AG04449 (cell line): ENCODE measurements at regions of chr1 and their contacts with region 1.

Region 1: GRCh38 chr1:203267347-203267846 is 37.9 kb upstream of the BTG2 start:
- DNase-seq: peak; percentile 29
- H3K4me3 ChIP-seq: peak overlapping the region; percentile 72
- CTCF ChIP-seq: peak; percentile 82

Region 2: DNA sequence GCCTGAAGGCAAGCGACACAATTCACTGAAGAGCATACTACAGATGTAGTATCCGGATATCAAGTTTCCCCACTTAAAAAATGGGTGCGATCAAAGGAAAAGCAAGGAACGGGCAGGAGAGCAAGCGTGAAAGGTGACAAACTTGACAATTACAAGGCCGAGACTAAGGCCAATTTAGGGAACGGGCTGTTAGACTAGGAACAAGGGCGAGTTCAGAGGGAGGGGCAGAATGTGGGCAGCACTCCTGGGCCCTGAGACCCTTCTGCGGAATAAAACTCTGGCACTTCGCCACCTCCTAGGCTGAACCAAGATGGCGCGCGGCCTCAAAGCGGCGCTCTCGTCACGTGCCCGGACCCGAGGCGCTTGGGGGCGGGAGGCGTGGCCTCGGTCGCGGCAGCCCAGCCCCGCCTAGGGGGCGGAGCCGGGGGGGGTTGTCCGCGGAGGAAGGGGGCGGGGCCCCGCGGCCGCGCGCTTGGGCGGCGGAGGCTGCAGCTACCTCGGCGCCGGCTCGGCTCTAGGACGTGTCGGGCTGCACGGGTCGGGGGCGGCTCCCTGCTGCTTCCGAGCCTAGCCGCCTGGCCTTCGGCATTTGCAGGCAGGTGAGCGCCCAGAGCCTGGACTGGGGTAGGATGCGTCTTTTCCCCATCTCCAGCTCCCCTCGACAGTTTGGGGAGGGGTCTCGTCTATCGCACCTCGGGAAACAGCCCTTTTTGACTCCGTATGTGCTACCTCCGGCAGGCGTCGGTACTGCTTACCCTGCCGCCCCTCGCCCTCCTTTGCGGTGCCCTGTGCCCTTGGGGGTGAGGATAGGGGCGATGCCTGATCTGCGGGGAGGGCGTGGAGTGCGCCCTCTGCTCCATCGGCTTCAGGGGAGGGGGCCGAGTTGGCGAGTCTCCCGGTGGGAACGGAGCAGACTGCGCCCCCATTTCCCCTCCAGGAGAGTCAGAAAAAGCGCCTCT is 241.1 kb before region 1 on chr1 and contains the start of gene PPFIA4:
- CTCF ChIA-PET with region 1: interaction called, 98 read pairs
- POLR2A ChIA-PET with region 1: no interaction called
- DNase-seq: no peak
- H3K4me3 ChIP-seq: peak within 1 kb of the TSS; percentile 88
- CTCF ChIP-seq: no peak

Region 3: DNA sequence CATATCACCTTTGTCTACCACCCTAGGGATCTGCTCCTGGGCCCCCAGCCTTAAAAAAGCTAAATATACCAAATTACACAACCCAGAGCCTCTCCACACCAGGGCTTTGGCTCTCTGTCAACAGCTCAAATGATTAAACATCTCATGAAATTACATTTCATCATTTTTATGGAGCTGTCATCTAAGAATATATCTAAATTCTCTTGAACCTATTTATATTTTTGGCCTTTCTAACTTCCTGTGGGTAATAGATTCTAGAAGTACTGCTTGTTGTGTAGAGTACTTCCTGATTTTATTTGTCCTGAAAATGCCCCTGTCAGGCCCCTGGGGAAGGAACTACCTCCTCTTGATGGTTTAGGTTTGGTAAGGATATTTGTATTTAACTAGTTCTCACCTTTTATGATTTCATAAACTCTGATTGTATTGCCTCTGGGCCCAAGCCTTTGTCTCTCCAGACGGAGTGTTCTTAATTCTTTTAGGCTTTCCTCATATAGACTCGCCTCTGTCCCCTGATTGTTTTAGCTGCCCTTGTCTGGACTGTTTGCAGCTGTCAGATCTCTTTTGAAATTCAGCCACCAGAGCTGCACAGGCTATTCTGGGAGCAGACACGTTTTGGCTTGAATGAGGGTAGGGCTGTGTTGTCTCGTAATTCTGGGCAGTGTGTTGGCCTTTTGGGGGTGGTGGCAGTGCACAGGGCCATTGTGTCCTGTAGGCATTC is 198.2 kb before region 1 on chr1:
- CTCF ChIA-PET with region 1: interaction called, 24 read pairs
- POLR2A ChIA-PET with region 1: no interaction called
- DNase-seq: no peak
- H3K4me3 ChIP-seq: no peak overlapping the region
- CTCF ChIP-seq: no peak

Region 4: GRCh38 chr1:203127666-203128430 is 139.5 kb before region 1 on chr1 and contains the start of gene ADORA1:
- CTCF ChIA-PET with region 1: interaction called, 67 read pairs
- POLR2A ChIA-PET with region 1: no interaction called
- DNase-seq: no peak
- H3K4me3 ChIP-seq: peak within 1 kb of the TSS; percentile 57
- CTCF ChIP-seq: peak; percentile 14

Region 5: DNA sequence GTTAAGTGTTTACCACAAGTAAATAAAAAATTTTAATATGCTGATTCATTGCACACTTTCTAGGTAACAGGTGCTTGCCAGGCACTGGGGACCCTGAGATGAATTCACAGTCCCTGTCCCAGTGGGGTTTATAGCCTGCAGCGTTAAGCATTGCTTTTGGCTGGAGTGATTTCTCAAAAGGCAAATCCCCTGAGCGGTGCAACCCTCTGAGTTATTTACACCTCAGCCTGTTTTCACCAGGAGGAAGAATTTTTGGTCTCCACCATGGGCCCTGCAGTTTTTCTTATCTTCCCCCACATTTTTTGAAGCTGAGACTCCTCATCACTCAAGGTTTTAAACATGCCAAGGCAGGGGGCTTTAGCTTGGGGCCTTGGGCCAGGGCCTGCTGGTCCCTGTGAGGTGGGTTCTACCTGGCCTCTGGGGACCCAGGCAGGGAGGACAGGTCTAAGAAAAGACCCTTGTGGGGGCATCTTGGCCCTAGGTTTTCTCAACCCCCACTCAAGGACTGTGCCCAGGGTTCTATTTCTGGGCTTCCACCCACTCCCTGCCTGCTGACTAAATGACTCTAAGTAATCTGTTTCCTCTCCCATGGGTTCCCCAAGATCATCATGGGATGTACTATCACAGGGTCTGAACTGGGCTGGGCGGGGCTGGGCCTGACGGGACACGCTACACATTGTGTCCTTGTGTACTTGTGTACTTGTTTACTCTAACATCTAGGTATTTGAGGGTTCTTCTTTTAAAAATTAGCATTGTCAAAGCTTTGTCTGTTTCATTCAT is 27.7 kb before region 1 on chr1:
- CTCF ChIA-PET with region 1: interaction called, 12 read pairs
- POLR2A ChIA-PET with region 1: no interaction called
- DNase-seq: no peak
- H3K4me3 ChIP-seq: no peak overlapping the region
- CTCF ChIP-seq: no peak

Region 6: GRCh38 chr1:203475012-203475981 is 207.9 kb after region 1 on chr1 and contains the start of gene PRELP:
- CTCF ChIA-PET with region 1: interaction called, 15 read pairs
- POLR2A ChIA-PET with region 1: no interaction called
- DNase-seq: no peak
- H3K4me3 ChIP-seq: peak within 1 kb of the TSS; percentile 50
- CTCF ChIP-seq: peak; percentile 33